ENCODE measurements at regions of chr2 and their contacts with region 1.

Region 1: DNA sequence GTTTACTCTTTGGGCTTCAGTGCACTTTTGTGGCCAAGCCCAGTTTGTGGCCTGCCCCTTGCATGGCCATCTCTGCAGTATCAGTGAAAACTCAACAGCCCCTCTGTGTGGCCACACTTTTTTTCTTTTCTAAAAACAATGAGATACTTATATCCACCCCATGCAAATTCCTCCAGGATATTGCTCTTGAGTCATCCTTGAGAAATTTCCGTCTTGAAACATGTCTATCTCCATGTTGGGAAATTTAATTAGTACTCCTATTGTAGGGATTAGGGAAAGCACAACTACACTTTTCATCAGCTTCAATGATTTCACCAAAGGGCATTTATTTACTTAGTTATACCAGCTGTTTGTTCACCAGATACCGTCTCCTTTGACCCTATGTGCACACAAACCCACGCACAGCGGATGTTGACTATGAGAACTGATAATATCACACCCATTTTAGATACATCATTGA is 993.1 kb downstream of the TSN start:
- DNase-seq: peak; percentile 96
- ATAC-seq: peak; percentile 96
- H3K4me3 ChIP-seq: no peak overlapping the region
- H3K27ac ChIP-seq: peak overlapping the region; percentile 96
- H3K4me1 ChIP-seq: peaks cover 23% of the 10 kb centered on the region
- H3K27me3 ChIP-seq: no peaks in the 10 kb centered on the region
- CTCF ChIP-seq: peak; percentile 65

Region 2: DNA sequence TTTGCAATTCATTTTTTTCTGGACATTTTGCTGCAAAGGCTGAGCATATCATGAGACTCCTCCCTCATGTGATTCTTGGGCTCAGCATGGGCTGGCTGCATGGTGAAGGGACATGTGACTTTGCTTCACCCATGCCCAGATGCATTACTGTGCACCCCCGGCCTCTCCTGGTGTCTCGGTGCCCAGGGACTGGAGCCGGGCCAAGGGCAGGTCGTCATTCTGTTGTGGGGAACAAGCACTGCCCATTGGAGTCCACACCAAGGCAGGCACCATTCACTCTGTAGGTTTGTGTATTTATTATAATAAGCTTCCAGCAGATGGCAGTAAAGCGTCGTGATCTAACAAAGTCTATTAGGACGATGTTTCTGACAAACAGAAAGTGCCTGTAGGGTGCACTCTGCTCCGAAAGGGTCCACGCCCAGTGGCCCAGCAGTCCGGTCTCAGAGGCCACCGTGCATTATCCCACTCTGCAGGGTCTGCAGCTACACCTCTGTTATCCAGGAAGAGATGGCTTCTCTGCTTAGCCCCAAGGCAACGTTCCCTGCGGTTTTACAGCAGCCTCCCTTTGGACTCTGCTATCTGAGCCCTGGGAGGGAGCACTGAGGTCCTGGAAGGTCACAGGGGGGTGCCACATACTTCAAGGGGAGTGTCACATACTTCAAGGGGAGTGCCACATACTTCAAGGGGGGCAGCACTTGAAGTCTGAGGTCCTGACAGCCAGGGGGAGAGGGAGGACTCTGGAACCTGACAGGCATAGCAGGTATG is 773.5 kb before region 1 on chr2:
- CTCF ChIA-PET with region 1: no interaction called
- POLR2A ChIA-PET with region 1: no interaction called
- intact Hi-C with region 1: loop called (anchors 1 kb)
- DNase-seq: peak; percentile 91
- ATAC-seq: peak; percentile 98
- H3K4me3 ChIP-seq: peak overlapping the region; percentile 48; the same call in 1 of the 2 replicates
- H3K27ac ChIP-seq: no peak overlapping the region
- H3K4me1 ChIP-seq: no peaks in the 10 kb centered on the region; the same call in 1 of the 2 replicates
- H3K27me3 ChIP-seq: peaks cover 17% of the 10 kb centered on the region; the same call in 1 of the 2 replicates
- CTCF ChIP-seq: peak; percentile 79

Region 3: GRCh38 chr2:122451040-122451439 is 297.5 kb before region 1 on chr2:
- CTCF ChIA-PET with region 1: no interaction called
- POLR2A ChIA-PET with region 1: no interaction called
- intact Hi-C with region 1: loop called (anchors 10 kb)
- DNase-seq: peak; percentile 66
- ATAC-seq: peak; percentile 56; the same call in 1 of the 2 replicates
- H3K4me3 ChIP-seq: no peak overlapping the region
- H3K27ac ChIP-seq: no peak overlapping the region
- H3K4me1 ChIP-seq: no peaks in the 10 kb centered on the region
- H3K27me3 ChIP-seq: no peaks in the 10 kb centered on the region
- CTCF ChIP-seq: peak; percentile 74

Region 4: DNA sequence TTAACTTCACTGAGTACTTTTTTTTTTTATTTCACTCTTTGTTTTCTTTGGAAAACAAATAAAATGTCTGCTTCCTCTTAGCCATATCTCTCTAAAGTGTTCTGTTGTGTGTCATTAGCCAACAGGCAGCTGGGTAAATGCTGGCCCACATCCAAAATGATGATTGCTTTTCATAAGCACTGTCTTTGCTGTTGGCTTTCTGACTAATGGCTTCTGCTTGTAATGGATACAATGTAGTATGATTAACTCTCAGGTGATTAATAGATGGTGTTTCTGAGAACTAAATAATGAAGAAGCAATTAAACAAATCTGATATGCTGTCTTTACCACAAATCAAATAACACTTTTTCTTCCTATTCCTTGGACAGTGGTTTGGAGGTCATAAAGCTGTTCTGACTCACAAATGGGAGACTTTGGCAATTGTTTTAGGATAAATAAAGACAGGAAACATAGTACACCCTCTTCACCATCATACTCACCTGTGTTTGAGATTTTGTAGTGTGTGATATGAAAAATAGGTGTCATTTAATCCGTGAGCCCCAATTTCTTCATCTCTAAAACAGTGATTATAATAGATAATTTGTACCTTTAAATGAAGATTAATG is 104.8 kb before region 1 on chr2:
- CTCF ChIA-PET with region 1: no interaction called
- POLR2A ChIA-PET with region 1: no interaction called
- intact Hi-C with region 1: loop called (anchors 5 kb)
- DNase-seq: peak; percentile 97
- ATAC-seq: peak; percentile 95
- H3K4me3 ChIP-seq: no peak overlapping the region
- H3K27ac ChIP-seq: peak overlapping the region; percentile 64
- H3K4me1 ChIP-seq: peaks cover 23% of the 10 kb centered on the region
- H3K27me3 ChIP-seq: no peaks in the 10 kb centered on the region
- CTCF ChIP-seq: no peak

Region 5: GRCh38 chr2:122851972-122852531 is 103.5 kb after region 1 on chr2:
- CTCF ChIA-PET with region 1: no interaction called
- POLR2A ChIA-PET with region 1: no interaction called
- intact Hi-C with region 1: loop called (anchors 1 kb)
- DNase-seq: peak; percentile 87
- ATAC-seq: peak; percentile 74
- H3K4me3 ChIP-seq: no peak overlapping the region
- H3K27ac ChIP-seq: peak overlapping the region; percentile 85
- H3K4me1 ChIP-seq: peaks cover 50% of the 10 kb centered on the region
- H3K27me3 ChIP-seq: no peaks in the 10 kb centered on the region
- CTCF ChIP-seq: no peak

Region 6: GRCh38 chr2:123364243-123364896 is 615.8 kb after region 1 on chr2:
- CTCF ChIA-PET with region 1: no interaction called
- POLR2A ChIA-PET with region 1: no interaction called
- intact Hi-C with region 1: loop called (anchors 10 kb)
- DNase-seq: no peak
- ATAC-seq: peak; percentile 8; the same call in 1 of the 2 replicates
- H3K4me3 ChIP-seq: no peak overlapping the region
- H3K27ac ChIP-seq: peak overlapping the region; percentile 14; the same call in 1 of the 2 replicates
- H3K4me1 ChIP-seq: peaks cover 19% of the 10 kb centered on the region
- H3K27me3 ChIP-seq: no peaks in the 10 kb centered on the region
- CTCF ChIP-seq: no peak

Region 7: DNA sequence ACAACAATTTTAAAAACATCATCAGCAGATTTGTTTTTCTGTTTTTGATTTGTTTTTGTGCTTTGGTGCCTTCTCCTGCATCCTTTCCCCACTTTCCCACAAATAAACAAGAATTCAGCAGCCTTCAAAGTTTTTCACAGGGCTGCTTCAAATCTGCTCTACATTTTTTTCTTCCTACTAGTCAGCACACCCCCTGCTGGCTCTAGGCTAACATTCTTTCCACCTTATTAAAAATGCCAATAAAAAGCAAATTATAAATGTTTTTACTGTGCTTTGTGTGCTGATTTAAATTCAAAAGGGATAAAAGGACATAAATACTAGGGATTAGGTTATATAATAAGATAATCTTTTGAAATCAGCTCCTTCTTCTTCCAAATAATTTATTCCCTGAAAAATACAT is 1270.3 kb after region 1 on chr2:
- CTCF ChIA-PET with region 1: no interaction called
- POLR2A ChIA-PET with region 1: no interaction called
- intact Hi-C with region 1: loop called (anchors 5 kb)
- DNase-seq: peak; percentile 36
- ATAC-seq: no peak; the same call in 1 of the 2 replicates
- H3K4me3 ChIP-seq: no peak overlapping the region
- H3K27ac ChIP-seq: no peak overlapping the region
- H3K4me1 ChIP-seq: no peaks in the 10 kb centered on the region
- H3K27me3 ChIP-seq: no peaks in the 10 kb centered on the region
- CTCF ChIP-seq: peak; percentile 67

Measured in PC-3 (cell line).